ENCODE measurements at regions of chr11 and their contacts with region 1.

Region 1: GRCh38 chr11:9314291-9315036 is at the start of gene TMEM41B:
- DNase-seq: peak; percentile 99
- ATAC-seq: peak; percentile 93 to 97
- H3K4me3 ChIP-seq: peak within 1 kb of the TSS; percentile 78
- H3K27ac ChIP-seq: peak within 1 kb of the TSS; percentile 93 to 96
- H3K4me1 ChIP-seq: peaks cover 38% of the 10 kb centered on the region
- CTCF ChIP-seq: no peak
- EP300 ChIP-seq: no peak
- POLR2A ChIP-seq: peak; percentile 84
- RAD21 ChIP-seq: peak in 1 of 2 experiments; percentile 11; a peak in 1 of 5 replicates
- polyA plus RNA-seq, gene TMEM41B: 57.7 and 71.4 TPM in 2 replicates

Region 2: DNA sequence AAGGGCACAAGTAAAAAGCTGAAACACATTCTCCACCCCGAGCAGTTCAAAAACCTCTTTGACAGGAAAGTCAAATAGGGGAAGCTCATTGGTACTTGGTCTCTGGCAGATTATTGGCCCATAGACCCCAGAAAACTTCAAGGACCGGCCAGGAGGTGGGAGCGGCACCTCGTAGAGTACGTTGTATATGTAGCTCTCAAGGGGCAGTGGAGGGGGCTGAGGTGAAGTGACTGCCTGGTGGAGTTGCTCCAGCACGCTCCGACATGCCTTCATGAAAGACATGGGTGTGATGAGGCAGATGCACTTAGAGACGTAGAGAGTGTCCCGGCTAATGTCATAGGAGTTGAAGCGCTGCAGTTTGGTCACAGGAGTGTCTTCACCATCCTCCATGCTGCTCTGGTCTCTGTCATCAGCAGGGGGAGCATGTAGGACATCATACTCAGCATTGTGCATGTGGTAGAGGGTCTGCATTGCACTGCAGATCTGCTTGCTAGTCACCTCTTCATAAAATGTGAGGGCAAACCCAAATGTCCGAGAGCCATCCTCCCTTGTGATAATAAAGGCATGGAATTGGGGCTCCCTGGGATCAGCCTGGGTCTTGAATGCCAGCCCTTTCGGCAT is 110.7 kb before region 1 on chr11:
- CTCF ChIA-PET with region 1: no interaction called
- POLR2A ChIA-PET with region 1: no interaction called
- DNase-seq: peak in 1 of 2 experiments; percentile 14
- ATAC-seq: peak; percentile 56 to 71; a peak in 4 of 6 replicates
- H3K4me3 ChIP-seq: no peak overlapping the region
- H3K27ac ChIP-seq: no peak overlapping the region
- H3K4me1 ChIP-seq: peaks cover 2% of the 10 kb centered on the region; the same call in 1 of the 3 replicates
- CTCF ChIP-seq: no peak
- EP300 ChIP-seq: no peak
- POLR2A ChIP-seq: no peak
- RAD21 ChIP-seq: 0 out of 5 replicates have a peak, but pooled peaks of 1 of the 2 experiments have one; percentile 37

Region 3: DNA sequence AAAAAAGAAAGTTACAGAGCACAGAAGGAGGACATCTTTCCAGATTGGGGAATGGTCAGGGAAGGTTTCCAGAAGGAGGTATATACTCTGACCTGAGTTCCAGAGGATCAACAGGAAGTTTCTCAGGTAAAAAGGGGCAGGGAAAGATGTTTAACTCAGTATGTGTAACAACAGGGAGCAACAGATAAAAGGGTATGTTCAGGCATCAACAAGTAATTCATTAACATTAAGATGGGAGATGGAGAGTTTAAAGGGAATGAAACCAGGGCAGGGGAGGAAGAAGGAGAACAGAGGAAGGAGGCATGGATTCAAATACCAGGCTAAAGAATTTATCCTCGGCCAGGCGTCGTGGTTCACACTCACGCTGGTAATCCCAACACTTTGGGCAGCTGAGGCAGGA is 46.8 kb before region 1 on chr11:
- CTCF ChIA-PET with region 1: no interaction called
- POLR2A ChIA-PET with region 1: no interaction called
- DNase-seq: no peak
- ATAC-seq: no peak
- H3K4me3 ChIP-seq: no peak overlapping the region
- H3K27ac ChIP-seq: no peak overlapping the region
- H3K4me1 ChIP-seq: peaks cover 11% of the 10 kb centered on the region
- CTCF ChIP-seq: no peak
- EP300 ChIP-seq: no peak
- POLR2A ChIP-seq: no peak
- RAD21 ChIP-seq: no peak

Region 4: GRCh38 chr11:9363954-9364912 is 49.8 kb after region 1 on chr11:
- CTCF ChIA-PET with region 1: interaction called, 3 read pairs
- POLR2A ChIA-PET with region 1: interaction called, 11 read pairs
- DNase-seq: peak; percentile 92 to 99
- ATAC-seq: peak; percentile 98 to 99
- H3K4me3 ChIP-seq: 0 out of 3 replicates have a peak overlapping the region, but pooled peaks have one; percentile 6
- H3K27ac ChIP-seq: peak overlapping the region; percentile 99 to 100
- H3K4me1 ChIP-seq: peaks cover 36% of the 10 kb centered on the region
- CTCF ChIP-seq: no peak
- EP300 ChIP-seq: peak; percentile 64 to 87; a peak in 3 of 5 replicates
- POLR2A ChIP-seq: peak; percentile 45
- RAD21 ChIP-seq: peak; percentile 24 to 43; a peak in 2 of 5 replicates

Region 5: GRCh38 chr11:9672288-9672916 is 357.9 kb after region 1 on chr11:
- CTCF ChIA-PET with region 1: no interaction called
- POLR2A ChIA-PET with region 1: no interaction called
- DNase-seq: no peak
- ATAC-seq: no peak
- H3K4me3 ChIP-seq: no peak overlapping the region
- H3K27ac ChIP-seq: no peak overlapping the region
- H3K4me1 ChIP-seq: no peaks in the 10 kb centered on the region
- CTCF ChIP-seq: no peak
- EP300 ChIP-seq: no peak
- POLR2A ChIP-seq: no peak
- RAD21 ChIP-seq: no peak